Psoas muscle (tissue), 8 donors: ENCODE measurements at regions of chr10 and their contacts with region 1.

Region 1: DNA sequence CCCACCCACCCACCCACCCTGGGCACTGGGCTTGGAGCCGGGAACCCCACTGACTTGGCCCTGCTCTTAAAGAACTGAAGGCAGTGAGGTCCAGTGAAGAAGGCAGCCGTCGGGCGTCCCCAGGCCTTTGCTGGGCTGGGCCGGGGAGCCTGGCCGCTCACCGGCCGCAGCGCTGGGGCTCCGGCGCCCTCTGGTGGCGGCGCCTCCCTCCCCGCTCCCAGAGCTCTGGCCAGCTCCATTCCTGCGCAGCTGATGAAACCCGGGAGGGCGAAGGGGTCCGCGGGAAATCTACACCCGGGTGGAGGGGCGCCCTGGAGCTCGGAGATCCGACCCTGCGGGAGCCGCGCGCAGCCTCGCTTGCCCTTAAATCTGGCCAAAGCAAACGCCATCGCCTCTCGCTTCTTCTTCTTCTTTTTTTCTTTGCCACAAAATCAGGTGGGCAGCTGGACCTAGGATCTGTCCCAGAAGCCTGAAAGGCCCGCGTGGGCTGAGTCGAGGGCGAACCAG is 1.7 kb upstream of the CXCL12 start:
- DNase-seq: peak; percentile 74 to 84
- ATAC-seq: peak; percentile 78 to 85 (median 82)
- H3K4me3 ChIP-seq: peak overlapping the region; percentile 20
- H3K27ac ChIP-seq: no peak overlapping the region
- H3K4me1 ChIP-seq: peaks cover 26% of the 10 kb centered on the region
- H3K27me3 ChIP-seq: no peaks in the 10 kb centered on the region
- CTCF ChIP-seq: peak; percentile 91

Region 2: GRCh38 chr10:43671656-43672531 is 714.7 kb before region 1 on chr10:
- intact Hi-C with region 1: loop called (anchors 2 to 5 kb)
- DNase-seq: peak in 1 of 2 donors; percentile 32
- ATAC-seq: peak; percentile 71 to 89 (median 86)
- H3K4me3 ChIP-seq: no peak overlapping the region
- H3K27ac ChIP-seq: no peak overlapping the region
- H3K4me1 ChIP-seq: no peaks in the 10 kb centered on the region
- H3K27me3 ChIP-seq: peaks cover 0 to 17% (median 6%) of the 10 kb centered on the region in 3 donors
- CTCF ChIP-seq: peak; percentile 83

Region 3: GRCh38 chr10:43689955-43690771 is 696.4 kb before region 1 on chr10:
- intact Hi-C with region 1: loop called in 1 of 2 experiments (anchors 1 kb)
- DNase-seq: peak; percentile 86 to 92
- ATAC-seq: peak; percentile 97 to 99 (median 98)
- H3K4me3 ChIP-seq: peak overlapping the region; percentile 66
- H3K27ac ChIP-seq: peak overlapping the region; percentile 68
- H3K4me1 ChIP-seq: no peaks in the 10 kb centered on the region
- H3K27me3 ChIP-seq: no peaks in the 10 kb centered on the region
- CTCF ChIP-seq: peak; percentile 85

Region 4: GRCh38 chr10:44310762-44311562 is 75.6 kb before region 1 on chr10:
- intact Hi-C with region 1: loop called (anchors 2 kb)
- DNase-seq: peak; percentile 90 to 95
- ATAC-seq: peak; percentile 92 to 96 (median 94)
- H3K4me3 ChIP-seq: peak overlapping the region; percentile 60
- H3K27ac ChIP-seq: peak overlapping the region; percentile 21
- H3K4me1 ChIP-seq: peaks cover 13% of the 10 kb centered on the region
- H3K27me3 ChIP-seq: no peaks in the 10 kb centered on the region
- CTCF ChIP-seq: peak; percentile 94

Region 5: DNA sequence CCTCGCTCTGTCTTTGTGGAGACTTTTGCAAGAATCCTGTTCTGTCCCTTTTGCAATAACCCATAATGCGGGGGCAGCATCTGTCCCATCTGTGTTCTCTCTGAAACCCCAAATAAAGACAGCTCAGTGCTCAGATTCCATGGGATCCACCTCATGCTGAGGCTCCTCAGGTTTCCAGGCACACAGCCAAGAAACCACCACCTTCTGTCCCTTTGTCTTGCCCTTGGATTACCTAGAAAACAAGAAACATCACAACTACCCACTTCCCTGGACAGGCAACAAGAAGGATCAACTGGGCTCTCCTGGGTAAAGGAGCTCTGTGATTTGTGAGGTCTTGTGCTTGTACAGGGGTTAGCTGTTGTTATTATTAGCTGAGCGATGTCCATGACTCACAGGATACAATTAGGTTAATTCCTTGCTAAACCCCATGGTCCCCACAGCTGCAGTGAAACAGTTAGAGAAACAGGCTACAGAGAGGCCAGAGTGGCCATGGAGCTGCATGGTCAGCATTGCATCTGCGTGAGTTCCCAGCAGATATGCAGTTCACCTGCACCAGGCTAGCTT is 51.9 kb before region 1 on chr10:
- intact Hi-C with region 1: loop called in 1 of 2 experiments (anchors 2 kb)
- DNase-seq: no peak
- ATAC-seq: peak; percentile 93 to 96 (median 94)
- H3K4me3 ChIP-seq: peak overlapping the region; percentile 16
- H3K27ac ChIP-seq: peak overlapping the region; percentile 84
- H3K4me1 ChIP-seq: peaks cover 45% of the 10 kb centered on the region
- H3K27me3 ChIP-seq: no peaks in the 10 kb centered on the region
- CTCF ChIP-seq: no peak

Region 6: DNA sequence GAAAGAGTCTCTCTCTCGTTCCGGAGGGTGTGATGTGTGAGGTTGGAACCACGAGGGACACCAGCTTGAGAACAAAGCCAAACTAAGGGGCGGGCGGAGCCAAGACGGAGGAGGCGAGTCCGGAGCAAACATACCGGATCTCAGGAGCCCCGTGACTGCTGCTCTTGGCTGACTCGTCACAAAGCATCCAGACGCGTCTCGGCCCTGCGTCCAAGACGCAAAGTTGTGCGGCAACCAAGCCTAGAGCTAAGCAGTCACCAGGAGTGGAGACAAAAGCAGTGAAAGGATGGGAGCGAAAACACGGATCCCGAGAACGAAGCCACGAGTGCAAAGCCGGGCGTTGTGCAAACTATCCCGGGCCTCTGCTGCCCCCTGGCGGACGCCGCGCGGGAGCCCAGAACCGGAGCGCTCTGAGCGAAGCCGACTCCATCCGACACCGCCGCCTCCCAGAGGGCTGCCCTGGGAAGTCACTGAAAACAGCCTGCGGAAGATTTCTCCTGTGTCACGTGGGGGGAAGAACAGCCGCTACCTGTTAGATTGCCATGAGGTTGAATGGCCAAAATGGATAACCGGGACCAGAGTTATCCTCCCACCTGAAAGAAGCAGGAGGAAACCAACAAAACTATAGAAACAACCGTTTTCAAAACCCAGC is 478.2 kb after region 1 on chr10:
- intact Hi-C with region 1: loop called in 1 of 2 experiments (anchors 2 kb)
- DNase-seq: peak; percentile 91 to 95
- ATAC-seq: peak; percentile 95 to 99 (median 98)
- H3K4me3 ChIP-seq: peak overlapping the region; percentile 63
- H3K27ac ChIP-seq: no peak overlapping the region
- H3K4me1 ChIP-seq: no peaks in the 10 kb centered on the region
- H3K27me3 ChIP-seq: peaks cover 0 to 4% (median 2%) of the 10 kb centered on the region in 3 donors
- CTCF ChIP-seq: peak; percentile 95

Region 7: GRCh38 chr10:44962870-44963738 is 576.5 kb after region 1 on chr10:
- intact Hi-C with region 1: no loop called
- DNase-seq: peak; percentile 76 to 85
- ATAC-seq: peak; percentile 67 to 77 (median 74)
- H3K4me3 ChIP-seq: peak overlapping the region; percentile 51
- H3K27ac ChIP-seq: peak overlapping the region; percentile 94
- H3K4me1 ChIP-seq: peaks cover 80% of the 10 kb centered on the region
- H3K27me3 ChIP-seq: no peaks in the 10 kb centered on the region
- CTCF ChIP-seq: peak; percentile 54